ENCODE measurements at regions of chr3 and their contacts with region 1.

Region 1: GRCh38 chr3:157159762-157160657 is at the start of gene CCNL1:
- DNase-seq: peak; percentile 97
- ATAC-seq: peak; percentile 79
- H3K4me3 Mint-ChIP-seq: peak within 1 kb of the TSS; percentile 84
- H3K27ac Mint-ChIP-seq: peak within 1 kb of the TSS; percentile 97
- H3K4me1 Mint-ChIP-seq: peaks cover 37% of the 10 kb centered on the region
- H3K27me3 Mint-ChIP-seq: no peaks in the 10 kb centered on the region
- total RNA-seq, gene CCNL1: 163 to 215 TPM

Region 2: GRCh38 chr3:155870133-155870944 is 1289.7 kb before region 1 on chr3 and contains the start of gene GMPS:
- CTCF ChIA-PET with region 1: no interaction called
- POLR2A ChIA-PET with region 1: interaction called, 3 read pairs
- intact Hi-C with region 1: loop called in 1 of 2 experiments (anchors 1 kb)
- DNase-seq: peak; percentile 97
- ATAC-seq: peak; percentile 93
- H3K4me3 Mint-ChIP-seq: peak within 1 kb of the TSS; percentile 99
- H3K27ac Mint-ChIP-seq: peak within 1 kb of the TSS; percentile 98
- H3K4me1 Mint-ChIP-seq: peaks cover 20% of the 10 kb centered on the region
- H3K27me3 Mint-ChIP-seq: no peaks in the 10 kb centered on the region
- total RNA-seq, gene GMPS: 154 to 161 TPM

Region 3: GRCh38 chr3:156816800-156817645 is 343.0 kb before region 1 on chr3:
- CTCF ChIA-PET with region 1: no interaction called
- POLR2A ChIA-PET with region 1: no interaction called
- intact Hi-C with region 1: loop called in 1 of 2 experiments (anchors 1 kb)
- DNase-seq: peak; percentile 92
- ATAC-seq: peak; percentile 83
- H3K4me3 Mint-ChIP-seq: peak overlapping the region; percentile 79
- H3K27ac Mint-ChIP-seq: peak overlapping the region; percentile 92
- H3K4me1 Mint-ChIP-seq: peaks cover 36% of the 10 kb centered on the region
- H3K27me3 Mint-ChIP-seq: no peaks in the 10 kb centered on the region

Region 4: GRCh38 chr3:157130467-157131251 is 29.4 kb before region 1 on chr3:
- CTCF ChIA-PET with region 1: interaction called, 3 read pairs
- POLR2A ChIA-PET with region 1: interaction called, 5 read pairs
- intact Hi-C with region 1: loop called (anchors 1 to 2 kb)
- DNase-seq: peak; percentile 86
- ATAC-seq: peak; percentile 19
- H3K4me3 Mint-ChIP-seq: peak overlapping the region; percentile 57
- H3K27ac Mint-ChIP-seq: peak overlapping the region; percentile 95
- H3K4me1 Mint-ChIP-seq: peaks cover 76% of the 10 kb centered on the region
- H3K27me3 Mint-ChIP-seq: no peaks in the 10 kb centered on the region

Region 5: DNA sequence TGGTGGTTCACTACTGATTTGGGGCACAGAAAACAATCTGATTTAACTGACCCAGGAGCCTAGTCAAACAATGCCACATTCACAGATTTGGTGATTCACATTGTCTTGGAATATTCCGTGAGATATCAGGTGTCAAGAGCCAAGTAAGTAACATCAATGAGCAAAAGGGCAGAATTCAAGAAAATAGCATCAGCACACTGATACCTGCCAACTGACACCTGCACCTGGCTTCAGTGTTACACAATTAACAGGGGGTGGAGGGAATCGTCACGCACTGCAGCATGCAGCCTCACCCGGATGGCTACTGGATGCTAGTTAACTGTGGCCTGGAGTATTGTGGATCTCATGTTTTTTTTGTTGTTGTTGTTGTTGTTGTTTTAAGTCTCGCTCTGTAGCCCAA is 17.7 kb before region 1 on chr3:
- CTCF ChIA-PET with region 1: interaction called, 13 read pairs
- POLR2A ChIA-PET with region 1: interaction called, 34 read pairs
- intact Hi-C with region 1: loop called in 1 of 2 experiments (anchors 2 kb)
- DNase-seq: no peak
- ATAC-seq: no peak
- H3K4me3 Mint-ChIP-seq: no peak overlapping the region
- H3K27ac Mint-ChIP-seq: no peak overlapping the region
- H3K4me1 Mint-ChIP-seq: peaks cover 8% of the 10 kb centered on the region
- H3K27me3 Mint-ChIP-seq: no peaks in the 10 kb centered on the region

Region 6: DNA sequence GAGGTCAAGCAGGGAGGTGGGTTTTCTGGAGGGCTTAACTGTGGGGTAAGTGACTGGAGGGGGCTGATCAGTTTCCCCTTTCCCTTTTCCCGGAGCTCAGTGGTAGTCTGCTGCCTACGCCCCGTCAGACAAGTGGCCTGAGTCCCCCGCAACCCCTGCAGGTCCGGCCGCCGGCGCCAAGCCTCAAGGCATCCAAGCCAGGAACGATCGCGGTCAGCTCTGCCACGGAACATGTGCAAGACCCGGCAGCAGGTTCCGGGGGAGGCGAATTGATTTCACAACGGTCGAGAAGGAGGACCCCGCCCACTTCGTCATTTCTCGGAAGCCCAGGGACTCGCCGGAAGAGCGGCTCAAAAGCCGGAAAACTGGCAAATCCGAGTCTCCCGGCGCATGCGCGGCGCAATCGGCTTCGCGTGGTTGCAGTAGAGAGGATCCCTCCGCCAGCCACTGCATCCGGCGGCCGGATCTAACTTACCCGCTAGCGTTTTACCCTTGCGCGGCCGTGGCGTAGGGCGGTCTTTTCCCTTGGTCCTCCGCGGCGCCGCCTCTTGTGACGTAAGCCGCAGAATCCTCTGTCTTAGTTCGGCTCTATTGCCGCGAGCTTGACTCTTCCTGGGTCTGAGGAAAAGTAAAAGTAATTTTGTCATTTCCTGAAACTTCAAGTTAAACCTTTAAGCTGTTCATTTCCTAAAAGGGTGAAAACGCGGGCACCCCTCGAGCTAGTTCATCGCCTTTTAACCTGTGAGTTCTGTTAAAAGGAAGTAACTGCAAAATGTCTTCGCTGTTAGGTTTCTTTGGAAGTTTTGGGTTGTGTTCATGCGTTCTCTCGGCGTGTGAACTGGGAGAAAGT is 14.9 kb after region 1 on chr3:
- CTCF ChIA-PET with region 1: interaction called, 47 read pairs
- POLR2A ChIA-PET with region 1: interaction called, 127 read pairs
- intact Hi-C with region 1: loop called (anchors 1 kb)
- DNase-seq: peak; percentile 99
- ATAC-seq: peak; percentile 95
- H3K4me3 Mint-ChIP-seq: peak overlapping the region; percentile 94
- H3K27ac Mint-ChIP-seq: peak overlapping the region; percentile 99
- H3K4me1 Mint-ChIP-seq: peaks cover 20% of the 10 kb centered on the region
- H3K27me3 Mint-ChIP-seq: no peaks in the 10 kb centered on the region

Region 7: GRCh38 chr3:157239082-157239704 is 79.2 kb after region 1 on chr3:
- CTCF ChIA-PET with region 1: interaction called, 6 read pairs
- POLR2A ChIA-PET with region 1: no interaction called
- intact Hi-C with region 1: loop called (anchors 1 kb)
- DNase-seq: peak; percentile 88
- ATAC-seq: peak; percentile 100
- H3K4me3 Mint-ChIP-seq: no peak overlapping the region
- H3K27ac Mint-ChIP-seq: no peak overlapping the region
- H3K4me1 Mint-ChIP-seq: peaks cover 3% of the 10 kb centered on the region
- H3K27me3 Mint-ChIP-seq: no peaks in the 10 kb centered on the region

Measured in activated CD4-positive, alpha-beta T cell treated with anti-CD3 and anti-CD28 coated beads for 36 hours (primary cell).